HAP-1 (cell line): ENCODE measurements at regions of chr9 and their contacts with region 1.

Region 1: GRCh38 chr9:100011062-100011681 is 87.6 kb downstream of the ERP44 start:
- DNase-seq: peak; percentile 41 to 56
- H3K4me3 ChIP-seq: no peak overlapping the region
- H3K4me1 ChIP-seq: peaks cover 21% of the 10 kb centered on the region
- H3K27me3 ChIP-seq: no peaks in the 10 kb centered on the region

Region 2: DNA sequence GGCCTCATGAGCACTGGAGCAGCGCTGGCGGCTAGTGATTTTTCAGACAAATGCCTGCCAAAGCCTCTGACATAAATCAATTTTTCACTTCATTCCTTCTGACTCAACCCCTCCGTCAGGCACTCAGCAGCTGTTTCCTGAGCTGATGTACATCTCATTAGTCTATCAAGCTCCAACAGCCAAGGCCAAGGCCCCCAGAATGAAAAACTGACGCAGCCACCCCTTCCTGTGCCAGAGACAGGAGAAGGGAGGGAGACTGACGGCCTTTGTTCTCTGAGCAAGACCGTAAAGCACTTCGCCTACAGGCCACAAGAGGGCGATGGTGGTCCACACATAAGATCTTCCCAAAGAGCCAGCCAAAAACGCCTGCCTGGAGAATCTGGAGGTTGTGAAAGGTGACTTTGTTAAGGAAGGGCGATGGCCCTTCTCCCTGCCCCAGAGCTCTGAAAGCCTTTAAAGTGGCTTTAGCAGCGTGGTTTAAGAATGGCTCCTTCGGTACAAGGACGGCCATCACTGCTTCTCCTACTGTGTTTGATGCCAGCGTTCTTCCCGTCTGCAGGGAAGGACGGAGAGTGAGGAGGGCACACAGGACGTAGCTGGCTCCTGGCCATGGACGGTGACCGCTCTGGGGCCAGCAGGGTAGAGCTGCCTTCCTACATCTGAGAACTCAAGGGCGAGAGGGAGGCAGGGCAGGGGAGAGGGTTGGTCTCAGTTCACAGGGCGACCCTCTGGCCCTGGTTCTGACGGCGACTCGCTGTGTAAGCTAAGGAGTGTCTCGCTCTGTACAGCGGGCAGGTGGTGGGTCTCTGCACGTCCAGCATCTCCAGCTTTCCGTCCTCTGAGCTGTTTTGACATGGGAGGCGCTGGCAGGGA is 826.5 kb before region 1 on chr9:
- in situ Hi-C with region 1: loop called (anchors 25 kb)
- DNase-seq: peak; percentile 67 to 89
- H3K4me3 ChIP-seq: no peak overlapping the region
- H3K4me1 ChIP-seq: no peaks in the 10 kb centered on the region
- H3K27me3 ChIP-seq: peaks cover 13% of the 10 kb centered on the region